ENCODE measurements at regions of chr9 and their contacts with region 1.

Region 1: GRCh38 chr9:69759421-69760277 is at the start of gene PTAR1:
- DNase-seq: peak; percentile 81 to 98 (median 85)

Region 2: DNA sequence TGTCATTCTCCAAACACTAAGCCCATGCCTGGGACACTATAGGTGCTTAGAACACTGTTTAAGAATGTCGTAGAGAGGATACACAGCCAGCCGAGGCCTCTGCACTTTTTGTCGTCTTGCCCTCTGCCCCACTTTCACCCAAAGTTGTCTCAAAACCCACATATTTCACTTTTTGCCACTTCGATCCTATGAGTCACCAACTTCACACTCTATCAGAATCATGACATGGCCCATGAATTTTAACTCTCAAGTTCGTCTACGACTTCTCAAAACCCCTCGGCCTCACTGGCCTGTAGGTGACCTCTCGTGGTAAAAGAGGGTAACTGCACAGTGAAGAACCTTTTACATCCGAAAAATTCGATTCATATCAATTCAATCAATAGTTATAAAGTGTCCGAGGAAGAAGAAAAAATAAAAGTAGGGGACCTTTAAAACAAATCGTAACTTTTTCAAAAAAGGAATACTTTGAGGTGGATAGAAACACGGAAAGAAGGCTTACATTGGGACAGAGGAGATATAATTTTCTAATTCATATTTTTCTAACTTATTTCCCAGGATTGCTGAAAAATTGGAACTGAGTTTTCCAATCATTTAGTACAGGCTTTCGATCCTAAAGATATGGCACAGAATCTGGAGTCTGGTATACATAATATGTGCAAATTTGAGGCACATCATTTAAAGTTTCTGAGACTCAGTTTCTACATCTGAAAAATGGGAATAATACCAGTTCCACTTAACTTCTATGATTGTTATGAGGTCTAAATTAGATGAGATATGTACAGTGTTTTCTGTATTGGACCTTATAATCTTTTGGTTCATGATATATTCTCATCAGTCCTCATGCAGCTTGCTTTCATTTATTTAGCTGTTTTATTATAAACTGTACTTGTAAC is 210.1 kb before region 1 on chr9:
- intact Hi-C with region 1: loop called (anchors 10 kb)
- DNase-seq: peak in 2 of 10 donors; percentile 43 to 83

Region 3: DNA sequence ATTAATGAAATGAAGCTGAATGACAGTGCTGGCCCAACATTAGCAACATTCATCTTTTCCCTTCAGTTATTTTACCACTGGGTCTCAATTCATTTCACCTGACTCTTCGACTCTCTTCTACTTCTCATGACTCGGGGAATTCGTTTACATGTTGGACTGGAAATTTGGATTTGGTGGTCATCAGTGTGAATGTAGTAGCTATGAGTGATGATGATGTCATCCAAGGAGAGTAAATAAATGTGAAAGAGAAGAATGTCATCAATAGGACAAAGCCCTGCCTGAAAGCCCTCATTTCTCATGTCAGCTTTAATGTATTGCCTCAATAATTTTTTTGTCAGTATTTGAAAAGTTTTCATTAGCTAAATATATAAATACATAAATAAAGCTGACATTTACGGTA is 39.1 kb after region 1 on chr9:
- intact Hi-C with region 1: no loop called
- DNase-seq: no peak

Region 4: DNA sequence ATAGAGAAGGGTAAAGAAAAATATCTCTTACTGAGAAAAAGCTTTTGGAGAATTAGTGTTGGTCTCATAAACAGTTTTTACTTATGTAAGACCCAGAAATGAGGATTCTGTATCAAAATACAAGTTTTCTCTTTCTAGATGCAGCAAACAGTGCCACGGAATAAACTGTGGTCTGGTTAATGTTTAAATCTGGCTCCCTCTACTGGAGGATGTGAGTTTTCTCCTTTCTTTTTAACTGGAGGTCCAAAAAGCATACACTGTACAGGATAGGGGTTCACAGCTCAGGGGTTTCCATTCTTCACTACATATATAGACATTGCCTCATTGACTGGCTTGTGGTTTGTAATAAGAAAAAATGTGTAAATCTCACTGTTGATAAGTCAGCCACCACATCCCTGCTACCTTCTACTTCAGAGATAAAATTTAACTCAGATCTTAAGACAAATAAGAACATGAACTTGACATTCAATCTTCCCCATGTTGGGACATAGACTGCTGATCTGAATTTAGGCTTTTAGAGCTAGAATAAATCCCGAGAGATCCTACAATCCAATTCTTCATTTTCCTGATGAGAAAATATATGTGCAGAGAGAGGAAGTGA is 159.9 kb after region 1 on chr9:
- intact Hi-C with region 1: loop called (anchors 10 kb)
- DNase-seq: no peak

Region 5: GRCh38 chr9:70258692-70259511 is 499.3 kb after region 1 on chr9 and contains the start of gene SMC5:
- intact Hi-C with region 1: loop called (anchors 10 kb)
- DNase-seq: peak; percentile 83 to 98 (median 88)

Measured in posterior cingulate gyrus (tissue), 11 donors.